Motor neuron (in vitro differentiated cells): ENCODE measurements at regions of chr12 and their contacts with region 1.

Region 1: DNA sequence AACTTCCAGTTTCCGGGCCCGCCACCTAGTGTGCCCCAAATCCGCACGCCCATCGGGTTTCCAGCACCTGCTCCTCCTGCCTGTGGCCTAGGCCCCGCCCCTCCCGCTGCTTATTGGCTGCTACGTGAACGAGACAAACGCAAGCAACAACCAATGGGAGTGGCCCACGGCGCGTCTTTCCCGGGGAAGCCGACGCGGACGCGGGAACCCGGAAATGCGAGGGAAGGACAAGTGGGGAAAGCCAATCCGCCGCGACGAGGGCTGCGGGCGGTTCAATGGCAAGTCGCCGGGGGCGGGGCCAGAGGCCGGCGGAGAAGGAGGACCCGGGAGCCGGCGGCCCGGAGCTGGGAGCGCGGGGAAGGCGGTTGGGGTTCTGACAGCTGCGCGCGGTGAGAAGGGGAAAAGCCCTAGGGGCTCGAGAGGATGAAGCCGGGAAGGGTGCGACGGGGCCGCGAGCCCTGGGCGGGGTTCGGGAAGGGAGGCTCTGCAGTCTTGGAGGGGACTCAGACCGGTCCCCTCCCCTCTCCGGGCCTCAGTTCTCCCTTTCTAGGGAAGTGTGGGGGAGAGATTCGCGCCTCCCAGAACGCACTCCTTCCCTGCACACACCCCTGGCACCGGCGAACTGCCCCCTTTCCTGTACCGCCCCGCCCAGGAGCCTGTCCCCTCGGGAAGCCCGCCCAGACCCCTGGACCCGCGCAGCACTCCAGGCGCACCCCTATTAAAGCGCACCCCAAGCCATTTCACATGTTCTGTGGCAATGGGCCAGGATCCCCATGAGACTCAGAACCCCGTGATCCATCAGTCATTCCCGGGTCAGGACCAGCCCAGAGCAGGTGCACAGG is at the start of gene FICD:
- ATAC-seq: peak; percentile 86 to 97 (median 95)
- H3K4me3 ChIP-seq: peak within 1 kb of the TSS; percentile 54 to 93 (median 78)
- H3K27ac ChIP-seq: peak within 1 kb of the TSS; percentile 34 to 71
- H3K4me1 ChIP-seq: peaks cover 6 to 12% of the 10 kb centered on the region in 2 donors
- total RNA-seq, gene FICD: 4.6 to 14.1 (median 6.7) TPM

Region 2: DNA sequence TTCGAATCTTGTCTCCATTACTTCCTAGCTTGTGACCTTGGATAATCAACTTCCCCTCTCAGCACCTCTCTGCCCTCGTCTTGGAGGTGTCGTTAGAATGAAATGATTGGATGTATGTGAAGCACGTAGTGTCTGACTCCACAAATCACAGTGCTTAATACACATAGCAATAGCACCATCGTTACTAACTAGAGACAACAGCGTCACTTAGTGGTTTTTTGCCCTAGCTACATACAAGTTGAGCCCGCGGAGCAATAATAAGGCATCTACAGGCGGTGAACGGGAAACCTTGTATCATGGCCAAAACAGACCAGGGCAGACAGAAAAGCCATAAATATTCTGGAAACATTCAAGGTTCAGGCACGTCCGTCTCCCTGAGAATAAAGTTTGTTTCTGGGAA is 585.8 kb before region 1 on chr12:
- in situ Hi-C with region 1: loop called in 1 of 9 experiments (anchors 25 kb)
- ATAC-seq: peak in 5 of 8 experiments; percentile 19 to 100 (median 94)
- H3K4me3 ChIP-seq: no peak overlapping the region
- H3K27ac ChIP-seq: no peak overlapping the region
- H3K4me1 ChIP-seq: no peaks in the 10 kb centered on the region

Region 3: DNA sequence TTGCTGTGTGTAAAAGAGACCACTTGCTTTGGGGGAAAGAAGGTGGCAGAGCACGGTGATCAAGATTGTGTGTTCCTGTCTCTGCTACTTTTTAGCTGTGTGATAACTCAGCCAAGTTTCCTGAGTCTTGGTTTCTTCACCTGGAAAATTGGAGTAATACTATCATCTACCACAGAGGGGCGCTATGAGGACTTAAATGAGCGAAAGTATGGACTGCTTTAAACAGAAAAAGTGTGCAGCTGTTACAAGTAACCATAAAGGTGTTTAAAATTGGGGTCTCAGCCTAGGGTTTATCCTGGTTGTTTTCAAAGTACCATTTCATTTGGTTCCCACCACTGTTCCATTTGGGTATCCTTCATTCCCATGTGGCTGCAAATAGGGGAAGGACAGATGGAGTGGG is 452.0 kb before region 1 on chr12:
- in situ Hi-C with region 1: no loop called
- ATAC-seq: peak in 2 of 8 experiments; percentile 36 to 39
- H3K4me3 ChIP-seq: no peak overlapping the region
- H3K27ac ChIP-seq: no peak overlapping the region
- H3K4me1 ChIP-seq: peaks cover 10 to 18% of the 10 kb centered on the region in 2 donors

Region 4: DNA sequence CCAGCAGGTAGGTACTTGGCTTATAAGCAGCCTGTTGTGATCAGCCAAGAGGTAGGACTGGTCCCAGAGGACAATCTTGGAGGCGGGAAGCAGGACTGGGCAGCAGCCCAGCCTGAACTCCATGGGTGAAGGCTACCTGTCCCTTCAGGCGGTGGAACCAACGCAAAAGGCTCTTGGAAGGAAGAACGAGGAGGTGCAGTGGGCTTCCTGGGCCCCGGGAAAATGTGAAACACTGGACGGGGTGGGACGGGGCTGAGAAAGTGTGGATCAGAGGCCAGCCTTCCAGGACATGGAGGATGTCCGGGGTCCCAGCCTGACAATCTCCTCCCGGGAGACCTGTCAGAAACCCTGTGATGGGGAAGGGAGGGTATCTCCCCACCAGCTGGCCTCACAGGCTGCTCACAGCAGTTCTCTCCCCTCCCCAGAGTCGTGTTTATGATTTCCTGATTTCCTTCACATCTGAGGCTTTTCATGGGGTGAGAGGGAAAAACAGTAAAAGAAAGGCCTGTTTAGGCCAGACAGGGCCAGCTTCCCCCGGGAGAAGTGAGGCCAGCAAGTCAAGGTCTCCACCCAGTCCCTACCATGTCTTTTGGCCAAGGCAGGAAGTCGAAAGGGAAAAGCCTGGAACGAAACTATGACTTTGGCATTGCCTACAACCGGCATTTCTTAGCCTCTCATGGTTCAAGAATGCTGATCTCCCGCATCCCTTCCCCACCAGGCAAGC is 187.4 kb before region 1 on chr12:
- in situ Hi-C with region 1: no loop called
- ATAC-seq: peak in 2 of 8 experiments; percentile 21 to 27
- H3K4me3 ChIP-seq: no peak overlapping the region
- H3K27ac ChIP-seq: no peak overlapping the region
- H3K4me1 ChIP-seq: peaks cover 3 to 7% of the 10 kb centered on the region in 2 donors

Region 5: DNA sequence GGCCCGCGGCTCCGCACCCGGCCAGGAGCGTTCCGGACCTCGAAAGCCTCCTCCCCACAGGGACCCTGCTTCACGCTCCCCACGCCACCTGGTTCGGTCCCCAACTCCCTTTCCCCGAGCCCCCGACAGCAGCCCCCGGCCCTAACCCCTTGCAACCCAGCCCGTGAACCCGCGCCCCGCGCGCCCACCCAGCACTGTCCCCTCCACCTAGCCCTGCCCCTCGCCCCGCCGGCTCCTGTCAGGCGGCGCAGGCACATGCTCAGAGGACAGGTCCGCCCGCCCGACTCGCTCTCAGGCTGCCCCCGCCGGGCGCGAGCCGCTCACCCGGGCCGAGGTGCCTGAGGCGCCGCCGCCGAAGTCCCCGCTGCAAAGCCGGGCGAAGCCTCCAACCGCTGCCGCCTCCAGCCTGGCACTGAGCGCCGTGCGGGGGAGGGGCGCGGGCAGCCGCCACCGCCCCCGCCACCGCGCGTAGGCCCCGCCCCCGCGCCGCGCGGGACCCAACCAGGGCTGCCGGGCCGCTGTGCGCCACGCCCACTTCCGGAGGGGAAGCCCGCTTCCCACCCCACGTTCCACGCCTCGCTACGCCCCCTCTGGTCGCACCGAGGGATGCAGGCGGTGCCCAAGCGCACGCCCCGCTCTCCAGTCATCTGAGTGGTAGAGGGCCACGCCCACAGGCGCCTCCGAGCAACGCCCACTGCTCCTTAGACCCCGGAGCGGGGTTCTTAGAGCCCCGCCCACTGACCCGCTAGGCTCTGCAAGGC is 216.1 kb after region 1 on chr12 and contains the start of gene CORO1C:
- in situ Hi-C with region 1: no loop called
- ATAC-seq: peak; percentile 53 to 80 (median 74)
- H3K4me3 ChIP-seq: peak within 1 kb of the TSS; percentile 61 to 78 (median 73)
- H3K27ac ChIP-seq: peak within 1 kb of the TSS; percentile 88 to 93
- H3K4me1 ChIP-seq: peaks cover 0 to 11% of the 10 kb centered on the region in 2 donors
- total RNA-seq, gene CORO1C: 35.4 to 75.1 (median 50.2) TPM